Mammary epithelial cell (primary cell): ENCODE measurements at regions of chr1 and their contacts with region 1.

Region 1: DNA sequence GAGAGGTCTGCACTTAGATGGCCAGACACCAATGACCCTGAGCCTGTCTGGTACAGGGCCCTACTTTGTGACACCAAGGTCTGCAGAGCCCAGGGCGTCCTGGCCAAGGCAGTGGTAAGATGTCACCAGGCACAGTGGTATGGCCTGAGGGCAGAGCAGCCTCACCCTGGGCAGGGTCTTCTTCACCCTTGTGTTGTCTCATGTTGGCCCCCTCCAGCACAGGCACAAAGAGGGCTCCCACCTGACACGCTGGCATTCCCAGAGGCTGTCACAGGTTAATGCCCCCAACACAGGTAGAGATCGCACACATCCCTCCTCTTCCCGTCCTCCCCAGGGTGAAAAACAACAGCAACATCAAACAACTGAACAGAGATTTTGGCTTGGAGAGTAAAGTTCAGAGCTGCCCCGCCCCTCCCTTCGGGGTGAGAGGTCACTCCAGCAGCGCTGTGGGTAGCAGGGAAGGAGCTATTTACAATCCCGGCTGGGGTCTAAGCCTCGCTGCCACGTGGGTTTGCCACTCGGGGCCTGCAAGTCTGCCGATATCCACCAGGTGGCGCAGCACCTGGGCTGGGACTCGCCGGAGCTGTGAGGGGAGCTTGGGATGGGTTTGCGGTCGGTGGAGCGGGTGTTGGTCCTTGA is 12.6 kb downstream of the EFNA3 start:
- DNase-seq: peak; percentile 41
- H3K4me3 ChIP-seq: no peak overlapping the region
- H3K27ac ChIP-seq: no peak overlapping the region
- H3K4me1 ChIP-seq: peaks cover 11% of the 10 kb centered on the region
- H3K27me3 ChIP-seq: no peaks in the 10 kb centered on the region
- CTCF ChIP-seq: peak; percentile 96 to 97

Region 2: DNA sequence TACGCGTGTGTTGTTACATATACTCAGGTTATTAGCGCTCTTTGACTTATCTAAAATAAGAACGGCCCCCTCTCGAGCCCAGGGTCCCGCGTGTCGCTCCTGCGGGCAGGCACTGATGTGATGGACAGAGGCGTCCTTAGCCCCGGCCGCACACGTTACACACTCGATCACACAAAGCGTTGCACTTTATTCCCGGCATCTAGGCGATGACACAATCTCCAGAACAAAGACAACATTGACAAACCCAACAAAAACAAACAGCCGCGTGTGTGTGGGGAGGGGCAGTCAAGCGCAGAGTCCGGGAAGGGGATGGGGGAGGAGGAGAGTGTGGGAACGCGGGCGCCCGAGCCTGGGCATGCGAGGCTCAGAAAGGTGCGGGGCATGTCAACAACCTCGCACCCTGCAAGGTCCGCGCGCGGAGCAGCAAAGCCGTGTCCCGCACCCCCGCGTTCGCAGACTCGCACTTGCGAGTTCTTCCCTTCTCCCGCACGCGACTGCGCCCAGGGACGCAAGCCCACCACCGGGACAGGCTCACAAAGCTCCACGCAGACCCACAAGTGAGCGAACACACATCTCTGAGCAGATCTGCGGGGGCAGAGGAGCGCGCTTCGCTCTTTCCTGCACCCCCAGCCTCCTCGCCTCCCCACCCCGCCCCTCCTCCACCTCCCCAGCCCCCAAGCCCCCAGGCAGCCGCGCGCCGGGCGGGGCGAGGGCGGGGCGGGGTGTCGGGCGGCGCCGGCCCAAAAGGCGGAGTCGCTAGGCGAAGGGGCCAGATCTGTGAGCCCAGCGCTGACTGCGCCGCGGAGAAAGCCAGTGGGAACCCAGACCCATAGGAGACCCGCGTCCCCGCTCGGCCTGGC is 36.1 kb after region 1 on chr1 and contains the start of gene EFNA1:
- CTCF ChIA-PET with region 1: interaction called, 6 read pairs
- dilution Hi-C with region 1: no loop called
- in situ Hi-C with region 1: no loop called
- intact Hi-C with region 1: loop called (anchors 1 kb)
- DNase-seq: peak; percentile 92
- H3K4me3 ChIP-seq: peak within 1 kb of the TSS; percentile 66 to 89 (median 76)
- H3K27ac ChIP-seq: peak within 1 kb of the TSS; percentile 92
- H3K4me1 ChIP-seq: peaks cover 65% of the 10 kb centered on the region
- H3K27me3 ChIP-seq: no peaks in the 10 kb centered on the region
- CTCF ChIP-seq: no peak
- total RNA-seq, gene EFNA1: 21.5 to 54.0 TPM

Region 3: DNA sequence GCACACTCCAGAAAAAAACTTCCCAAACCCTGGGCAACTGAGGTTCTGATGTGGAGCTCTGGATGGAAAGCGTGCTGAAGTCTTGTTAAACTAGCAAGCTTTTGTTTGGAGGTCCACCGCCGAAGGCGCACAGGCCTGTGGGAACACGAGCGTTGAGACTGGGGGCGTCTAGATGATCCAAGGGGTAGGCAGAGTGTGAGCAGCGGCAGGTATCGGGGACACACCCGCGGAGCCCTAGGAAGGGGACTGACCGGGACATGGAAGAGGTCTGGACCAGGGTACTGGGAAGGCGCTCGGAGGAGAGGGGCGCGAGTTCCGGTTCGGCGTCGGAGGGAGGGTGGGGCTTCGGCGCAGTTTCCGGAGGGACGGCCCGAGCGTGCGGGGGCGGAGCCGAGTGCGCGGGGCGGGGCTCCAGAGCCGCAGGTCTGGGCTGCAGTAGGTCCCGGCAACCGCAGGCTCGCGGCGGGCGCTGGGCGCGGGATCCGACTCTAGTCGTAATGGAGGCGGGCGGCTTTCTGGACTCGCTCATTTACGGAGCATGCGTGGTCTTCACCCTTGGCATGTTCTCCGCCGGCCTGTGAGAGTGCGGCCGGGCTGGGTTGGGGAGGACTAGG is 44.3 kb after region 1 on chr1 and contains the start of gene SLC50A1:
- CTCF ChIA-PET with region 1: no interaction called
- dilution Hi-C with region 1: no loop called
- in situ Hi-C with region 1: loop called in 1 of 2 experiments (anchors 5 kb)
- intact Hi-C with region 1: loop called (anchors 1 kb)
- DNase-seq: peak; percentile 91
- H3K4me3 ChIP-seq: peak within 1 kb of the TSS; percentile 64 to 80 (median 70)
- H3K27ac ChIP-seq: peak within 1 kb of the TSS; percentile 98
- H3K4me1 ChIP-seq: peaks cover 44% of the 10 kb centered on the region
- H3K27me3 ChIP-seq: no peaks in the 10 kb centered on the region
- CTCF ChIP-seq: peak in 1 of 2 donors; percentile 24
- total RNA-seq, gene SLC50A1: 31.3 to 40.2 TPM

Region 4: DNA sequence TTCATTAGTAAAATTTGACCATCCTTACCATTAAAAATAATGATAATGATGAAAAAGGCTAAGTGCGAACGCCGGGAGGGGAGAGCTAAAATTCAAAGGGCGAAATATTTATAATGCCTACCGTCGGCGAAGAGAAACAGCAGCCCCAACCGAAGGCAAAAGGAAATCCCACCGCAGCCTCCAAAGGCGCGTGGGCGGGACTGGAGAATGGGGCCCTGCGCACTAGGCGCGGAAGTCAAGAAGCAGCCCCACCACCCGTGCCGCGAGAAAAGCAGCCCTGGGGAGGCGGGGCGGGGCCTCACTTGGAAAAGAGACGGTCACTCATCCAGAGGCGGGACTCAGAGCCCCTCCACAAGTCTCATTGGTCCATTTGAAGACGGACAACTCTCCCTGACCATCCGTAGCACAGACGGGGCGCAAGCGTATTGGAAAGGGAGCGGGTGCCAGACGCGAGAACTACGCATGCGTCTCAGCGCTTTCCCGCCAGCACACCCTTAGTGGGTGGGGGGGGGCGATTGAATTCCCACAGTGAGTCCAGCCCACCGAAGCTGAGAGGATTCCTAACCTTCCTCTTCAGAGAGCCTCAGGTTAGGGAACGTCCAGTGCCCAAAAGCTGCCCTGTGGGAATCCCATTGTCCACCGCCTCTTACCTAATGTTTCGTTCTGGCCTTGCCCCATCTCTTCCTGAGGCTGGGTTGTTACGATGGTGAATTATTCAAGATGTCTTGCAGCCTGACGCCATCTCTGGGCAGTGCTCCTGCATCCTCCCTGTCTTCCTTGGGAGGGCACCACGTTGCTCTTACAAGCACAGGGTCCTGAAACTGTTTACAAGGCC is 136.3 kb after region 1 on chr1:
- CTCF ChIA-PET with region 1: no interaction called
- dilution Hi-C with region 1: no loop called
- in situ Hi-C with region 1: no loop called
- intact Hi-C with region 1: loop called (anchors 1 kb)
- DNase-seq: peak; percentile 98
- H3K4me3 ChIP-seq: peak overlapping the region; percentile 71 to 93 (median 76)
- H3K27ac ChIP-seq: peak overlapping the region; percentile 69
- H3K4me1 ChIP-seq: peaks cover 25% of the 10 kb centered on the region
- H3K27me3 ChIP-seq: no peaks in the 10 kb centered on the region
- CTCF ChIP-seq: no peak